Activated naive CD4-positive, alpha-beta T cell treated with anti-CD3 and anti-CD28 coated beads for 36 hours (primary cell): ENCODE measurements at regions of chr12 and their contacts with region 1.

Region 1: GRCh38 chr12:69570545-69571399 is 14.5 kb upstream of the CCT2 start:
- DNase-seq: peak; percentile 75
- H3K4me3 Mint-ChIP-seq: no peak overlapping the region
- H3K27ac Mint-ChIP-seq: no peak overlapping the region
- H3K4me1 Mint-ChIP-seq: peaks cover 11% of the 10 kb centered on the region
- H3K27me3 Mint-ChIP-seq: no peaks in the 10 kb centered on the region

Region 2: GRCh38 chr12:69385038-69385437 is 185.7 kb before region 1 on chr12:
- CTCF ChIA-PET with region 1: interaction called, 11 read pairs
- intact Hi-C with region 1: no loop called
- DNase-seq: no peak
- H3K4me3 Mint-ChIP-seq: no peak overlapping the region
- H3K27ac Mint-ChIP-seq: no peak overlapping the region
- H3K4me1 Mint-ChIP-seq: peaks cover 14% of the 10 kb centered on the region
- H3K27me3 Mint-ChIP-seq: no peaks in the 10 kb centered on the region

Region 3: DNA sequence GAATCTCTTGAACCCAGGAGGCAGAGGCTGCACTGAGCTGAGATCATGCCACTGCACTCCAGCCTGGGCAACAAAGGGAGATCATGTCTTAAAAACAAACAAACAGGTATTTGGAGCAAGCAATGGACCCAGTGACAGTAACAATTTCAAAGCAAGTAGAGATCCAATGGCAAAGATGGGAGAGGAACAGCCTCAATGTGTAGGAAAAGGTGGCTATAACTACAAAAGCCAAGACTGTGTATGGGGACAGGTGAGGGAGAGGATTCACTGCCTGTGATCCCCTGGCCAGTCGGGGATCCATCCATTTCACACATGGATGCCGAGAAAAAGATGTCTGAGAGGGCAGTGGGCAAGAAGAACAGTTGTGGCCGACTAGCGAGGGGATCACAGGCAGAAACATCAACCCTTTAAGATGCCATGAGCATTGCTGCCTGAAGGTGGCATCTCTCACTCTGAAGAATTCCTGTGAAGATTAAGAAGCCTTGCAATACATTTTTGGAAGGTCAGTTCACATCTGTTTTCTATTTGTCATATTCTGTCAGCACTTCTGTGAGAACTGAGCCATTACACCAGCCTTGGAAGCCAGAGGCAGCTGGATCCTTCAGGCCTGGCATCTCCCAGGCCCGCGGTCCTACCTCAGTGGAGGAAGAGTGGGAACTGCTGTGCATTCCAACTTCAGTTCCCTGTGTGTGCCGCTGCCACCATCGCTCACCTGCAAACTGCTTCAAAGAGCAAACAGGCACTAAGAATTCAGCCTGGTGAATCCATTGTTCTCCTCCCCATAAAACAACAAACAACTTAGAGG is 155.1 kb before region 1 on chr12:
- CTCF ChIA-PET with region 1: interaction called, 3 read pairs
- intact Hi-C with region 1: loop called (anchors 1 kb)
- DNase-seq: peak; percentile 25
- H3K4me3 Mint-ChIP-seq: no peak overlapping the region
- H3K27ac Mint-ChIP-seq: no peak overlapping the region
- H3K4me1 Mint-ChIP-seq: no peaks in the 10 kb centered on the region
- H3K27me3 Mint-ChIP-seq: no peaks in the 10 kb centered on the region

Region 4: DNA sequence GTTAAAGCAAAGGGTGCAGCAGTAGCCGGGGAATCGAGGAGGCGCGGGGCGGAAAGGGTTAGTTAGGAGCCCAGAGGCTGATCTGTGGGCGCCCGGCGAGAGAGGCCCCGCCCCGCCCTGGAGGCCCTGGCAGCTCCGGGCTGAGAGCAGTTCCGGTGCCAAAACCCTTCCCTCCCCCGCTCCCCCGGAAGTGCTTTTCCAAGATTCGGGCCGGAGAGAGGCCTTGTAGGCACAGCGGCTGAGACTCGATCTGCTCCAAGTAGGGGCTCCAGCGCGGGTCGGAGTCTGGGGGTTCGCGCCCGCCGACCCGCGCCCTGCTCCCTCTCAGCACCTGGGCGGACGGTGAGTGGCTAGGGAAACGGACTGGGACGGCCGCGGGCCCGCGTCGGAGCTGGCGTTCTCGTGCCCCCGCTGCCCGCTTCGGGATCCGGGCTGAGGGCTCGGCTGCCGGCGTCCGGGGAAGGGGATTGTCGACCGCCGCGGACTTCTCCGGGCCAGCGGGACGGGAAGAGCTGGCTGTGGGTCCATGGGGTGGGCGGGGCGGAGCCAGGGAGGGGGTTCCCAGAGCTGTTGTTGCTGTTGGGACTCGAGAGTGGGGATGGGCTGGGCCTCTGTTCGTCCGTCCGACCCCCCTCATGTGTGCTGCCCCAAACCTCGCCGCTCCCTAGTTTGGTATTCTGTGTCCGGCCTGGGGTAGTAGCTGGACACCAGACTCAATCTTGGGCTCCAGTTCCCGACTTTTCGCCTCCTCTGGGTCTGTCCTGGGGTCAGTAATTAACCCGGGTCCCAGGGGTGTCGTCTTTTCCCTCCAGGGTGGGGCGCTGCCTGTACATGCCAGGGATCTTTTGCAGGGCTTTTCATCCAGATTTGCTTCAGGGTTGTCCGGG is 100.3 kb before region 1 on chr12 and contains the start of gene FRS2:
- CTCF ChIA-PET with region 1: interaction called, 28 read pairs
- intact Hi-C with region 1: loop called (anchors 1 kb)
- DNase-seq: peak; percentile 93
- H3K4me3 Mint-ChIP-seq: peak within 1 kb of the TSS; percentile 98
- H3K27ac Mint-ChIP-seq: peak within 1 kb of the TSS; percentile 96
- H3K4me1 Mint-ChIP-seq: peaks cover 42% of the 10 kb centered on the region
- H3K27me3 Mint-ChIP-seq: no peaks in the 10 kb centered on the region
- total RNA-seq, gene FRS2: 7.9 TPM

Region 5: DNA sequence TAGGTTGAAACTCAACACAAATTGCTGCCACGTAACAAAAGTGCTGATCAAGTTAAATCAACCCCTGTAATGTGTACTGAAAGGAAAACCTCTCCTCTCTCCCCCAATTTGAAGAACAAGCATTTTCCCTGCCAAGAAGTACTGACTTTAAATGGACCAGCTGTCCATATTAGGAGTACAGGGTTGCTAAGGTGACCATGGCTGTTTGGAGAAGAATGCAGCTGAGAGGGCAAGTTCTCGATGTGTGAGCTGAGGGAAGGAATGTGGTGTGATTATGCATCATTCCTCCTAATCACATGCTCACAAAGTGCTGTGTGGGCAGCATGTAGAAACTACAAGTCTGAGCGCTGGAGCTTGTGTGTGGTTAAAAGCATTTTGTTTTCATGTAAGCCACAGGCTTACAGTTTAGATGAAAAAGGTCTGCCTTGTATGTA is 36.4 kb before region 1 on chr12:
- CTCF ChIA-PET with region 1: no interaction called
- intact Hi-C with region 1: no loop called
- DNase-seq: peak; percentile 51
- H3K4me3 Mint-ChIP-seq: no peak overlapping the region
- H3K27ac Mint-ChIP-seq: no peak overlapping the region
- H3K4me1 Mint-ChIP-seq: peaks cover 17% of the 10 kb centered on the region
- H3K27me3 Mint-ChIP-seq: no peaks in the 10 kb centered on the region

Region 6: DNA sequence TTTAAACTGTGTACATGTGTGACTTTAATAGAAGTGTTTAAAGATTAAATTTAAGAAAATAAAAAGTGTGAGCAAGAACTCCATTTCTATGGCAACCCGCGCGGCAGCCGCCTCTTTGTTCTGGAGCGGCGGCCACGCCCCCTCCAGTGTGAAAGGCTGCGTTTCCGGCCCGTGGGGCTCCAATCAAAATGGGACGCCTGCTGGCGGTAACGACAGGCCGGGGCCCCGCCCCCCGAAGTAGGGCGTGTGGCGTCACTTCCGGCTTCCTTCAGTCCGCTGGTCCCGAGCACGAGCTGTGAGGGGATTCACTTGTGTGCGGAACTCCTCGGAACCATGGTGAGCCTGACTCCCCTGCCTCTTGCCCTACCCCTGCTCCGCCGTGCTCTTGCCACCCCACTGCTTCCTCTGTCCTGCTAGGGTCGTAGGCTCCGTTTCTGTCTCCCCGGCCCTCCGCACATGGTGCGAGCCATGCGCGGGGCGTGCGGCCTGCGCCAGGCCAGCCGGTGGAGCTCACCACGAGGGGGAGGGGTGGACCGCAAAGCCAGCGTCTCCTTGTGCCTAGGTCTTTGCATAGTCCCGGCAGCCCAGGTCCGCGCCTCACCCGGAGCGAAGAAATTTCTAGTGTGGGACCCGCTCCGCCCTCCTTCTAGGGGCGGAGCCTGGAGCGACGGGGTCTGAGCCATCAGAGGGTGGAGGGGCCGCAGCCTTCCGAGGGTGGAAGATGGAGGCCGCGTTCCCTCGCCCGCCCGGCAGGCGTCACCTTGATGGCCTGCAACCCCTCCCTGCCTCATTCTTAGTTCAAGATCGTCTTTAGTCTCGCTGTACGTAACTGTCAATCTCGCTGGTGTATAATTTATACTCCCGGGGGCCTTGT is 14.7 kb after region 1 on chr12 and contains the start of gene CCT2:
- CTCF ChIA-PET with region 1: interaction called, 68 read pairs
- intact Hi-C with region 1: no loop called
- DNase-seq: peak; percentile 97
- H3K4me3 Mint-ChIP-seq: peak within 1 kb of the TSS; percentile 86
- H3K27ac Mint-ChIP-seq: peak within 1 kb of the TSS; percentile 92
- H3K4me1 Mint-ChIP-seq: peaks cover 27% of the 10 kb centered on the region
- H3K27me3 Mint-ChIP-seq: no peaks in the 10 kb centered on the region
- total RNA-seq, gene CCT2: 268 to 280 TPM